Activated CD8-positive, alpha-beta T cell treated with anti-CD3 and anti-CD28 coated beads for 36 hours (primary cell): ENCODE measurements at regions of chr18 and their contacts with region 1.

Region 1: DNA sequence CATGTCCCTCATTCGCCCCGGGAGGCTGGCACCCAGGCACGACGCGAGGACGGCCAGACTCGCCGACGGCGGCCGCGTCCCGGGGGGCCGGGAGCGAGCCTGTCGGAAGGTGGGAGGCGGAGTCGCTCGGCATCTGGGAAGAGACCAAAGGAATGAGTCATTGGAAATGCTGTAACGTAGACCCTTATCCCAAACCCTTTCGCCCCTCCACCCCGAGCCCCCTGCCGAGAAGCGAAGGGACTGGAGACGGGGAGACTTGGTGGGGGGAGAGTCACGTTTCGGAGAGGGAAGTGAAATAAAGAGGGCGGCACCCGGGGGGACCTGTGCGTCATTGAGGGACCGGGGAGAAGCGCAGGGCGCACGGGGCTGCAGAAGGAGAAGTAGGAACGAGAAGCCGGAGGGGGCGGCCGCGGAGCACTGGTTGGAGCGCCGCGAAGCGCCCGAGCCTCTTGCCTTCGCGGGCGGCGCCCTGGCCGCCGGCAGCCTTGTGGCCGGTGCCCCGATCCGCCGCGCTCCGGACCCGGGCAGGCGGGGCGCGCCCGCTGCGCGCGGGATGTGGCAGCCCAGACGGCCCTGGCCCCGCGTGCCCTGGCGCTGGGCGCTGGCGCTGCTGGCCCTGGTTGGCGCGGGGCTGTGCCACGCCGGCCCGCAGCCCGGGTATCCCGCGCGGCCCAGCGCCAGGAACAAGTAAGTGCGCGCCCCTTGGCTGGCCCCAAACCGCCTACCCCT is at the start of gene EMILIN2:
- DNase-seq: peak; percentile 68
- ATAC-seq: peak; percentile 38
- H3K4me3 Mint-ChIP-seq: peak within 1 kb of the TSS; percentile 77
- H3K27ac Mint-ChIP-seq: peak within 1 kb of the TSS; percentile 40
- H3K4me1 Mint-ChIP-seq: peaks cover 27% of the 10 kb centered on the region
- H3K27me3 Mint-ChIP-seq: peaks cover 41% of the 10 kb centered on the region
- CTCF ChIP-seq: no peak
- total RNA-seq, gene EMILIN2: 17.3 to 19.4 TPM

Region 2: GRCh38 chr18:2889761-2890192 is 43.0 kb after region 1 on chr18:
- CTCF ChIA-PET with region 1: no interaction called
- POLR2A ChIA-PET with region 1: interaction called, 3 read pairs
- intact Hi-C with region 1: loop called (anchors 5 kb)
- DNase-seq: no peak
- ATAC-seq: peak; percentile 24
- H3K4me3 Mint-ChIP-seq: no peak overlapping the region
- H3K27ac Mint-ChIP-seq: no peak overlapping the region
- H3K4me1 Mint-ChIP-seq: peaks cover 31% of the 10 kb centered on the region
- H3K27me3 Mint-ChIP-seq: no peaks in the 10 kb centered on the region
- CTCF ChIP-seq: no peak

Region 3: GRCh38 chr18:2905854-2906703 is 59.3 kb after region 1 on chr18:
- CTCF ChIA-PET with region 1: no interaction called
- POLR2A ChIA-PET with region 1: no interaction called
- intact Hi-C with region 1: no loop called
- DNase-seq: peak; percentile 51
- ATAC-seq: peak; percentile 48
- H3K4me3 Mint-ChIP-seq: peak overlapping the region; percentile 82
- H3K27ac Mint-ChIP-seq: peak overlapping the region; percentile 88
- H3K4me1 Mint-ChIP-seq: peaks cover 26% of the 10 kb centered on the region
- H3K27me3 Mint-ChIP-seq: no peaks in the 10 kb centered on the region
- CTCF ChIP-seq: no peak